ENCODE measurements at regions of chr1 and their contacts with region 1.

Region 1: DNA sequence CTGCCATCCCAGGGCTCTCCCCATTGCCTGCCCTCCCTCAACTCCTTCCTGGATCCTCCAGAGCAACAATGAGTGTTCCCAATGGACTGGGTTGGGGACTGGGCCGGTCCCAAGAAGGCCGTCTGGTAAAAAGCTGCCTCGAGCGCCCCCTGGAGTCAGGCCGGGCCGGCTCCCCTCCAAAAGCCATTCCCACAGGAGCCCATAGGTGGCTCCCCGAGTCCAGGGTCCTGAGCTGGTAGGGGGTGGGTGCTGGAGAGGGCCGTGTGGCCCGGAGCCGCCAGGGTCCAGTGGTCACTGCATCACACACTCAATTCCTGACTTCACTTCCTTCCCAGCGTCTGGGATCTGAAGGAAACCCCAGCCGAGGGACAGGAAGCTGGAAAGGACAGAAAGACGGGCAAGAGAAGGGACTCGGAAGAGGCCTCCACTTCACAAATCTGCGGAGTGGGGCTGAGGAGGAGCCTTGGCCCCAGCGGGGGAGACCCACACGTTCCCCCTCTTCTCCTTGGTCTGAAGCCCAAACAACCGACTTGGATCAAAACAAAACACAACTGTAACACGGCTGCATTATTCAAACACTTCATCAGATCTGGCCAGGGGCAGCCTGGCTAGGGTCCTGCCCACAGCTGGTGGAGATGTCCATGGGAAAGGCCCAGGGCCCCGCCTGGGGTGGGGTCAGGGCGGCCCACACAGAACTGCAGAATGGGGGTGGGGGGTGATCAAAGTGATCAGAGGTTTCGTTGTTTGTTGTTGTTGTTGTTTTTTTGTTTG is 10.9 kb upstream of the ALDH4A1 start:
- DNase-seq: peak; percentile 84 to 92 (median 85)
- ATAC-seq: peak; percentile 79 to 95 (median 90)
- H3K4me3 ChIP-seq: peak overlapping the region in 3 of 12 donors; percentile 7 to 15 (median 13)
- H3K27ac ChIP-seq: peak overlapping the region; percentile 7 to 79 (median 60)
- H3K4me1 ChIP-seq: peaks cover 0 to 36% (median 29%) of the 10 kb centered on the region in 12 donors
- H3K27me3 ChIP-seq: no peaks in the 10 kb centered on the region
- CTCF ChIP-seq: peak; percentile 90 to 99 (median 97)
- POLR2A ChIP-seq: no peak

Region 2: GRCh38 chr1:18530587-18531502 is 382.4 kb before region 1 on chr1:
- intact Hi-C with region 1: no loop called
- DNase-seq: no peak
- ATAC-seq: no peak
- H3K4me3 ChIP-seq: no peak overlapping the region
- H3K27ac ChIP-seq: no peak overlapping the region
- H3K4me1 ChIP-seq: peaks cover 0 to 6% (median 0%) of the 10 kb centered on the region in 12 donors
- H3K27me3 ChIP-seq: peaks cover 0 to 30% (median 2%) of the 10 kb centered on the region in 9 donors
- CTCF ChIP-seq: no peak
- POLR2A ChIP-seq: no peak

Region 3: DNA sequence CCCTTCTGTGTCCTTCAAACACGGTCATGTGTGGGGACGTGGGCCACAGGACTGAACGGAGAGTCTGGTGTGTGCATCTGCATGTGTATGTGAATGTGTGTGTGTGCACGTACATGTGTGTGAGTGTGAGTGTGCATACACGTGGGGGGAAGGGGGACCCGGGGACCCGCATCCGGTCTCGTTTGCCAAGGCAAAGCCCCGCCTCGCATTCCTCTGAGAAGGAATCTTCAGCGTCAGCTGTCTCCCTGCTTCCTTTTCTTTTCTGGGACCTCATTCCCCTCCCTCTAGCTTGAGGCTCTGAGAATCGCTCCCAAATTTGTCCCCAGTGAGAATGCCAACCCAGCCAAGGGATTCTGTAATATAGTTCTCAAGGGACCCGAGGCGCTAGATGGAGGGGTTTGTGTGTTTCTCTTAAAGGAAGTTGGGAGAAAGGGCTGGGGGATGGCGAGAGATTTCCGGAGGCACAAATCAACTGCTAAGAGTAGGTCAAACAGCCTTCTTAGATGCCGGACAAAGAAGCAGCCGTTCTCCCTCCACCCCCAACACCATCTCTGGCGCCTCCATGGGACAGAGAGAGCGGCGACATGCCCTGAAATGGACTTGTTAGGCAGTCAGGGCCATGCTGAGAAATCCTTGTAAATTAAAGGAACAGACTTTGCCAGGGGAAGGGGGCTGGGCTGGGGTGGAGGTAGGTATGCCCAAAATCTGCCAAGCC is 36.6 kb after region 1 on chr1:
- intact Hi-C with region 1: loop called in 5 of 10 experiments (anchors 5 to 10 kb)
- DNase-seq: peak in 2 of 5 donors; percentile 44 to 71
- ATAC-seq: peak in 3 of 4 donors; percentile 21 to 52 (median 32)
- H3K4me3 ChIP-seq: peak overlapping the region in 11 of 12 donors; percentile 7 to 61 (median 48)
- H3K27ac ChIP-seq: peak overlapping the region; percentile 69 to 96 (median 88)
- H3K4me1 ChIP-seq: peaks cover 5 to 96% (median 69%) of the 10 kb centered on the region in 12 donors
- H3K27me3 ChIP-seq: no peaks in the 10 kb centered on the region
- CTCF ChIP-seq: peak in 4 of 12 donors; percentile 9 to 38 (median 27)
- POLR2A ChIP-seq: no peak

Region 4: GRCh38 chr1:18972531-18972930 is 59.3 kb after region 1 on chr1:
- intact Hi-C with region 1: loop called in 3 of 10 experiments (anchors 5 to 10 kb)
- DNase-seq: no peak
- ATAC-seq: peak in 2 of 4 donors; percentile 18 to 41
- H3K4me3 ChIP-seq: no peak overlapping the region
- H3K27ac ChIP-seq: no peak overlapping the region
- H3K4me1 ChIP-seq: peaks cover 0 to 12% (median 0%) of the 10 kb centered on the region in 12 donors
- H3K27me3 ChIP-seq: no peaks in the 10 kb centered on the region
- CTCF ChIP-seq: peak in 11 of 12 donors; percentile 13 to 60 (median 42)
- POLR2A ChIP-seq: no peak

Region 5: GRCh38 chr1:19096036-19096833 is 183.0 kb after region 1 on chr1:
- intact Hi-C with region 1: loop called in 7 of 10 experiments (anchors 2 to 5 kb)
- DNase-seq: peak in 2 of 5 donors; percentile 47 to 49
- ATAC-seq: peak; percentile 64 to 85 (median 79)
- H3K4me3 ChIP-seq: no peak overlapping the region
- H3K27ac ChIP-seq: peak overlapping the region in 1 of 12 donors; percentile 20
- H3K4me1 ChIP-seq: peaks cover 0 to 14% (median 0%) of the 10 kb centered on the region in 12 donors
- H3K27me3 ChIP-seq: no peaks in the 10 kb centered on the region
- CTCF ChIP-seq: peak; percentile 35 to 70 (median 58)
- POLR2A ChIP-seq: no peak